ENCODE measurements at regions of chr10 and their contacts with region 1.

Region 1: GRCh38 chr10:93702211-93703001 is at the start of gene FRA10AC1:
- DNase-seq: peak; percentile 80 to 93 (median 86)
- ATAC-seq: peak; percentile 81
- H3K4me3 ChIP-seq: peak within 1 kb of the TSS; percentile 87
- H3K4me3 Mint-ChIP-seq: no peak within 1 kb of the TSS
- H3K27ac ChIP-seq: peak within 1 kb of the TSS; percentile 71 to 77
- H3K27ac Mint-ChIP-seq: no peak within 1 kb of the TSS
- H3K4me1 ChIP-seq: peaks cover 5% of the 10 kb centered on the region
- H3K4me1 Mint-ChIP-seq: peaks cover 19% of the 10 kb centered on the region
- H3K27me3 ChIP-seq: no peaks in the 10 kb centered on the region
- H3K27me3 Mint-ChIP-seq: no peaks in the 10 kb centered on the region
- CTCF ChIP-seq: no peak
- total RNA-seq, gene FRA10AC1: 10.0 to 10.3 TPM

Region 2: DNA sequence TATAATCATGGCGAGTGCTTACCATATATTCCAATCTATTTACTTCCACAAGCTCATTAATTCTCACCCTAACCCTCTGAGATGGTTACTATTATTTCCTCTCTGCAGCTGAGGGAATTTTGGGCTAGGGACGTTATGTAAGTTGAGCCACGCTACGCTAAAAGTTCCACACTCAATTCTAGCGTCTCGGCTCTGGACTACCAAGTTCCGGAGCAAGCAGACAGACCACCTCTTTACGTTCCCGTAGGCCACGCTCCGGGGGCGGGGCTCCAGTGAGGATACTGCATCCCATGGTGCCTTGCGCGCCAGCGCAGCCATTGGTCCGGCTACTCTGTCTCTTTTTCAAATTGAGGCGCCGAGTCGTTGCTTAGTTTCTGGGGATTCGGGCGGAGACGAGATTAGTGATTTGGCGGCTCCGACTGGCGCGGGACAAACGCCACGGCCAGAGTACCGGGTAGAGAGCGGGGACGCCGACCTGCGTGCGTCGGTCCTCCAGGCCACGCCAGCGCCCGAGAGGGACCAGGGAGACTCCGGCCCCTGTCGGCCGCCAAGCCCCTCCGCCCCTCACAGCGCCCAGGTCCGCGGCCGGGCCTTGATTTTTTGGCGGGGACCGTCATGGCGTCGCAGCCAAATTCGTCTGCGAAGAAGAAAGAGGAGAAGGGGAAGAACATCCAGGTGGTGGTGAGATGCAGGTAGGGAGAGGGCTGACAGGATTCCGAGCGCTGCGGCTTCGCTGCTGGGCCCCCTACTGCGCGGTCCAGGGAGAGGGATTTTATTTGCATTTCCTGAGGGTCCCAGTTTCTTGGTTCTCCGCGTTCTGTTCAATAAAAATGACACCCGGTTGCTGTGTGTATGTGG is 1109.4 kb before region 1 on chr10 and contains the start of gene KIF11:
- CTCF ChIA-PET with region 1: no interaction called
- POLR2A ChIA-PET with region 1: interaction called, 3 read pairs
- intact Hi-C with region 1: loop called in 1 of 2 experiments (anchors 5 kb)
- DNase-seq: peak; percentile 91 to 98 (median 96)
- ATAC-seq: peak; percentile 81
- H3K4me3 ChIP-seq: peak within 1 kb of the TSS; percentile 75
- H3K4me3 Mint-ChIP-seq: peak within 1 kb of the TSS; percentile 99
- H3K27ac ChIP-seq: peak within 1 kb of the TSS; percentile 84 to 89
- H3K27ac Mint-ChIP-seq: peak within 1 kb of the TSS; percentile 99
- H3K4me1 ChIP-seq: peaks cover 38% of the 10 kb centered on the region
- H3K4me1 Mint-ChIP-seq: peaks cover 29% of the 10 kb centered on the region
- H3K27me3 ChIP-seq: no peaks in the 10 kb centered on the region
- H3K27me3 Mint-ChIP-seq: no peaks in the 10 kb centered on the region
- CTCF ChIP-seq: no peak
- total RNA-seq, gene KIF11: 0.38 to 0.47 TPM

Region 3: GRCh38 chr10:92923416-92923815 is 779.0 kb before region 1 on chr10:
- CTCF ChIA-PET with region 1: no interaction called
- POLR2A ChIA-PET with region 1: no interaction called
- intact Hi-C with region 1: no loop called
- DNase-seq: no peak
- ATAC-seq: no peak
- H3K4me3 ChIP-seq: no peak overlapping the region
- H3K4me3 Mint-ChIP-seq: no peak overlapping the region
- H3K27ac ChIP-seq: no peak overlapping the region
- H3K27ac Mint-ChIP-seq: no peak overlapping the region
- H3K4me1 ChIP-seq: no peaks in the 10 kb centered on the region
- H3K4me1 Mint-ChIP-seq: no peaks in the 10 kb centered on the region
- H3K27me3 ChIP-seq: no peaks in the 10 kb centered on the region
- H3K27me3 Mint-ChIP-seq: no peaks in the 10 kb centered on the region
- CTCF ChIP-seq: no peak

Region 4: GRCh38 chr10:93893646-93894515 is 191.5 kb after region 1 on chr10 and contains the start of gene SLC35G1:
- CTCF ChIA-PET with region 1: no interaction called
- POLR2A ChIA-PET with region 1: interaction called, 4 read pairs
- intact Hi-C with region 1: loop called in 1 of 2 experiments (anchors 5 kb)
- DNase-seq: peak; percentile 42 to 87 (median 66)
- ATAC-seq: peak; percentile 91
- H3K4me3 ChIP-seq: peak within 1 kb of the TSS; percentile 68
- H3K4me3 Mint-ChIP-seq: peak within 1 kb of the TSS; percentile 91
- H3K27ac ChIP-seq: no peak within 1 kb of the TSS
- H3K27ac Mint-ChIP-seq: peak within 1 kb of the TSS; percentile 73
- H3K4me1 ChIP-seq: peaks cover 16% of the 10 kb centered on the region
- H3K4me1 Mint-ChIP-seq: peaks cover 47% of the 10 kb centered on the region
- H3K27me3 ChIP-seq: no peaks in the 10 kb centered on the region
- H3K27me3 Mint-ChIP-seq: peaks cover 8% of the 10 kb centered on the region
- CTCF ChIP-seq: no peak
- total RNA-seq, gene SLC35G1: 2.9 to 3.1 TPM

Measured in CD4-positive, alpha-beta T cell (primary cell).